ENCODE measurements at regions of chr20 and their contacts with region 1.

Region 1: GRCh38 chr20:4813863-4814695 is 92.4 kb downstream of the PRND start:
- DNase-seq: peak; percentile 76
- H3K4me3 Mint-ChIP-seq: peak overlapping the region; percentile 96
- H3K27ac Mint-ChIP-seq: peak overlapping the region; percentile 98
- H3K4me1 Mint-ChIP-seq: peaks cover 78% of the 10 kb centered on the region
- H3K27me3 Mint-ChIP-seq: no peaks in the 10 kb centered on the region

Region 2: GRCh38 chr20:4563534-4563933 is 250.5 kb before region 1 on chr20:
- CTCF ChIA-PET with region 1: no interaction called
- POLR2A ChIA-PET with region 1: no interaction called
- DNase-seq: peak; percentile 31
- H3K4me3 Mint-ChIP-seq: no peak overlapping the region
- H3K27ac Mint-ChIP-seq: no peak overlapping the region
- H3K4me1 Mint-ChIP-seq: no peaks in the 10 kb centered on the region
- H3K27me3 Mint-ChIP-seq: peaks cover 24% of the 10 kb centered on the region

Region 3: GRCh38 chr20:4787820-4788219 is 26.3 kb before region 1 on chr20:
- CTCF ChIA-PET with region 1: interaction called, 9 read pairs
- POLR2A ChIA-PET with region 1: interaction called, 102 read pairs
- DNase-seq: no peak
- H3K4me3 Mint-ChIP-seq: no peak overlapping the region
- H3K27ac Mint-ChIP-seq: peak overlapping the region; percentile 75
- H3K4me1 Mint-ChIP-seq: peaks cover 42% of the 10 kb centered on the region
- H3K27me3 Mint-ChIP-seq: no peaks in the 10 kb centered on the region

Region 4: GRCh38 chr20:4802527-4802926 is 11.6 kb before region 1 on chr20:
- CTCF ChIA-PET with region 1: interaction called, 4 read pairs
- POLR2A ChIA-PET with region 1: interaction called, 102 read pairs
- DNase-seq: no peak
- H3K4me3 Mint-ChIP-seq: no peak overlapping the region
- H3K27ac Mint-ChIP-seq: no peak overlapping the region
- H3K4me1 Mint-ChIP-seq: peaks cover 12% of the 10 kb centered on the region
- H3K27me3 Mint-ChIP-seq: no peaks in the 10 kb centered on the region

Region 5: GRCh38 chr20:5078399-5078958 is 264.4 kb after region 1 on chr20:
- CTCF ChIA-PET with region 1: interaction called, 4 read pairs
- POLR2A ChIA-PET with region 1: interaction called, 20 read pairs
- DNase-seq: peak; percentile 90
- H3K4me3 Mint-ChIP-seq: peak overlapping the region; percentile 68
- H3K27ac Mint-ChIP-seq: peak overlapping the region; percentile 97
- H3K4me1 Mint-ChIP-seq: peaks cover 54% of the 10 kb centered on the region
- H3K27me3 Mint-ChIP-seq: no peaks in the 10 kb centered on the region

Region 6: DNA sequence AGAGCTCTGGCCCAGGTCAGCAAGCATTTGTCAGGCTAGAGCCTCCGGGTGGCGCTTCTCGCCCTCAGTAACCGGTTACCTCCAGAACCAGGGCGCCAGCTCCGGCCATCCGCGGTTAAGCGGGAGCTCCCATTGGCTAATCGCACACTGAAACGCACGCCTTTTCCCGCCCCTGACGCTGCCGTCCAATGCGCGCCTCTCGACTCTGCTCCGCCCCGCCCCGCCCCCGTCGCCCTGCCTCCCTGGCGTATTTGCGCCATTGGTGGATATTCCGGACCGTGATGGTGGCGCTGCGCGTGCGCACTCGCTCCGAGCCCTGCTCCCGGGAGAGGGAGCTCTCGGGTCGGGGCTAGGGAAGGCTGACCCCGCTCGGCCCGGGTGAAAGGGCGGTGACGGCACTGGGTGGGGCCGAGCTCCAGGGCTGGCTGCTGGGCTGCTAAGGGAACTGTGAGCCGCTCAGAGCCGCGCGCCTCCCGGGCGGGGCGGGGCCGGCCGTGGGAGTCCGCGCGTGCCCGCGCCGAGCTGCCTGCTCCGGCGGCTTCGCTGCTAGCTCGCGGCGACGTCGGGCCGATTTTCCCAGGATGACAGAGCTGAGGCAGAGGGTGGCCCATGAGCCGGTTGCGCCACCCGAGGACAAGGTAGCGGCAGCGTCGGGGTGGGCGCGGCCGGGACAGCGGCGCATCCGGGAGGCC is 312.6 kb after region 1 on chr20 and contains the start of gene CDS2:
- CTCF ChIA-PET with region 1: no interaction called
- POLR2A ChIA-PET with region 1: interaction called, 36 read pairs
- DNase-seq: peak; percentile 100
- H3K4me3 Mint-ChIP-seq: peak within 1 kb of the TSS; percentile 97
- H3K27ac Mint-ChIP-seq: peak within 1 kb of the TSS; percentile 92
- H3K4me1 Mint-ChIP-seq: peaks cover 56% of the 10 kb centered on the region
- H3K27me3 Mint-ChIP-seq: no peaks in the 10 kb centered on the region
- total RNA-seq, gene CDS2: 67.4 to 68.2 TPM

Measured in activated CD4-positive, alpha-beta memory T cell treated with anti-CD3 and anti-CD28 coated beads, Interleukin-2, amount 10 ng/mL, durations not matched to agents 7 days and 5 days (primary cell).